ENCODE measurements at regions of chr20 and their contacts with region 1.

Region 1: GRCh38 chr20:53547664-53548239 is 45.9 kb downstream of the ZNF217 start:
- DNase-seq: peak; percentile 25 to 43
- H3K4me3 ChIP-seq: no peak overlapping the region
- H3K27ac ChIP-seq: no peak overlapping the region
- H3K4me1 ChIP-seq: peaks cover 0 to 6% of the 10 kb centered on the region in 2 donors
- H3K27me3 ChIP-seq: no peaks in the 10 kb centered on the region
- CTCF ChIP-seq: peak; percentile 62 to 91 (median 84)
- POLR2A ChIP-seq: no peak

Region 2: DNA sequence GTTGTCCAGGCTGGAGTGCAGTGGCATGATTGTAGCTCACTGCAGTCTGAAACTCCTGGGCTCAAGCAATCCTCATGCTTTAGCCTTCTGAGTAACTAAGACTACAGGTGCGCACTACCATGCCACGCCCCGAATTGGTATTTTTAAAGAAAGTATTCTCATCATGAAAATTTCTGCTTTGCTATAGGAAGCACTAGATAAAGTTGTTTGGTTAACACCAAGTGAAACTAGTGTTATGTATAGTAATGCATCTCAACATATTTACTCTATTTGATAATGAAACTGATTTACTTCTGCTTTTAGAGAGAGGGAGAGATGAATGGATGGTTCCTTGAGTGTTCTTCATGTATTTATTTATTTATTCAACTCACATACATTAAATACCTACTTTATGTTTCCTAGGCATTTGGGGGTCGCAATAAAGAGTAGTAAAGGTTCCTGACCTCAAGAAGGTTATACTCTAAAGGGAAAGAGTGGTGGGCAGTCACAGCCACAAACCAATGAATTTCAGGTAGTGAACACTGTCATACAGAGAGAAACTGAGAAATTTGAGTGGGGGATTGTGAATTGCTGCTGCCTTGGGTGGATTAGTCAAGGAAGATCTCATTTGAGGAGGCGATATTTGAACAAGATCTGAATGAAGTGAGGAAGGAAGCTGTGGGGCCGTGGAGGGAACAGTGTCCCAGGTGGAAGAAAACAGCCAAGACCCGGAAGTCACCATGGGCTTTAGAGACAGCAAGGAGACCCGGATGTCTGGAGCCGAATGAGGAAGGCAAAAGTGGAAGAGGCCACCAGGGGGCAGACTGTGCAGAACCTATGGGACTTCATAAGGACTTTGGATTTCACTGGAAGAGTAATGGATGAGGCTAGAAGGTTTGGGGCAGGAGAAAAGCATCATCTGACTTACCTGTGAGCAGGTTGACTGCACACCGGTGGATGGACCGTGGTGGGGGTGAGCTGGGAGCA is 390.0 kb before region 1 on chr20:
- intact Hi-C with region 1: loop called (anchors 10 kb)
- DNase-seq: peak; percentile 62 to 69
- H3K4me3 ChIP-seq: no peak overlapping the region
- H3K27ac ChIP-seq: no peak overlapping the region
- H3K4me1 ChIP-seq: peaks cover 0 to 5% of the 10 kb centered on the region in 2 donors
- H3K27me3 ChIP-seq: no peaks in the 10 kb centered on the region
- CTCF ChIP-seq: peak in 5 of 6 experiments; percentile 35 to 57 (median 50)
- POLR2A ChIP-seq: no peak

Region 3: DNA sequence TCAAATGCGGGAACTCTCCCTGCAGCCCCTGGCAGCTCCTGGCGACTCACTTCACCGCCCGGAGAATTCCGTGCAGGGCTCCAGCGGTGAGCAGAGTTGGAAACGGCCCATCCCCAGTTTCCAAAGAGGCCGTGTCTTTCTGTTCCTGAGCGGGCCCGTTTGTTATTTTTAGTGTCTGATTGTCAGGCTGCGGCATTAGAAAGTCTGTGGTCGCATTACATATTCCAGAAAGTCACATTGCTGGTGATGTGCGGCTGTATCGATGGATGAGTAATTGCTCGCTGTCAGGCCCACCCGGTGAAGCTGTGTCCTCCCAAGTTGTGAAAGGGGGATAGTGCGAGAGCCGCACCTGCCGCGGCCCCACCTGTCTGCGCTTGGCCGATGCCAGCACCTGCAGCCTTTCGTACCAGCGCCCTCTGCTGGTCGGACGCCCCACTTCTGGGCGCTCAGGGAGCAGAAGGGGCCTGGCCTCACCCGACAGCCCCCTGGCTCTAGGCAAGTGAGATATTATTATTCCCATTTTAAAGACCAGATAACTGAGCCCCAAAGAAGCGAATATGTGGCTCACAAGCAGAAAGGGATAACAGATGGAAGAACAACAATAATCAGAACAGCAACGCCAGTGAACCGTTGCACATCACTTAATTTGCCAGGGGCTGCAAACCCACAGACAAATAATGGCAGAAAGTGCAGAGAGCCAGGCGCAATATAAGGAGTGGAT is 330.7 kb before region 1 on chr20:
- intact Hi-C with region 1: loop called (anchors 5 kb)
- DNase-seq: peak; percentile 76 to 83
- H3K4me3 ChIP-seq: no peak overlapping the region
- H3K27ac ChIP-seq: no peak overlapping the region
- H3K4me1 ChIP-seq: peaks cover 0 to 5% of the 10 kb centered on the region in 2 donors
- H3K27me3 ChIP-seq: no peaks in the 10 kb centered on the region
- CTCF ChIP-seq: peak; percentile 64 to 96 (median 76)
- POLR2A ChIP-seq: no peak

Measured in thyroid gland (tissue), 4 donors.